ENCODE measurements at regions of chr10 and their contacts with region 1.

Region 1: DNA sequence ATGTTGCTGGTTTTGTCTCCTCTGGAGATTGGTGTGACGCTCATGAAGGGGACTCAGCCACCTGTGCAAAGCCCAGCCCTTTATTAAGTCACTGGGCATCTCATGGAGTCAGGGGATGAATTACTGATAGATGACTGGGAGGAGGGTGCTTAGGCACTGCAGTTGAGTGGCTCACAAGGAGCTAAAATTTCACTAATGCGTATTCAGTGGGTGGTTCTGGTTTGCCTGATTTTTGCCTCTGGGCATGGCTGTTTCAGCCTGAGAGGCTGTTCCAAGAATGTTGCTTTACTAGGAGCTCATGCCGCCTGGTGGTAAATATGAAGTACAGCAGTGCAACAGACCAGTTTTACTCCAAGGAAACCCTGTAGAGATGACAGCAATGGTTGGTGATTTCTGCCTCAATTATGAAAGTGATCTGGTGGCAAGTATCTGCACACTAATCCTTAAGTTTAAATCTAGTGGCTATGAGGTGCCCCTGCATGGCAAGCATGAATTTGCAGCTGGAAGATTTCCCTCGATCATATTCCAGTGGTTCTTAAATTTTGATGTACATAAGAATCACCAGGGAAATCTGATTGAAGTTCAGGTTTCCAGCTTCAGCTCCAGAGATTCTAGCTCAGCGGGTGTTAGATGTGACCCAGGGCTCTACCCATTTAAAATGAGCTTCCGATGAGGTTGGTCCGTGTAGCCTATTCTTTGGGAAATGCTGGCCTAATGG is 19.9 kb downstream of the ACTA2 start:
- DNase-seq: peak; percentile 59
- ATAC-seq: peak; percentile 84
- H3K4me3 Mint-ChIP-seq: no peak overlapping the region
- H3K27ac Mint-ChIP-seq: peak overlapping the region; percentile 20
- H3K4me1 Mint-ChIP-seq: peaks cover 18% of the 10 kb centered on the region
- H3K27me3 Mint-ChIP-seq: no peaks in the 10 kb centered on the region

Region 2: DNA sequence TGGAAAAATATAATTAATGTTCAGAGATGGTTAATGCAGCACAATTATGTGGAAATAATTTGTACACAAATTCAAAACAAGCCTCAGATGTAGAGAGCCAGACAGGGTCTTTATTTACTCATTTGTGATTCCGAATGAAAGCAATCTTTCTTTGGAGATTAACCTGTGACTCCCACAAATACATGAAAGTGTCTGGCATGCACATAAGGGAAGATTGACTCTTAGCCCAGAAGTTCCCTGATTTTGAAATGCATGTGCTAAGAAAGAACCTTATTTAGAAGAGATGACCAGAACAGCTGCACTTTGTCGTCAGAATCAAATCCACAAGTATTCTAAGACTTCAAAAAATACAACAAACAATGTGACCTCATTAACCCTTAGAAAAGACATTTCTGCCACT is 394.7 kb before region 1 on chr10:
- CTCF ChIA-PET with region 1: no interaction called
- POLR2A ChIA-PET with region 1: no interaction called
- intact Hi-C with region 1: no loop called
- DNase-seq: no peak
- ATAC-seq: no peak
- H3K4me3 Mint-ChIP-seq: no peak overlapping the region
- H3K27ac Mint-ChIP-seq: no peak overlapping the region
- H3K4me1 Mint-ChIP-seq: no peaks in the 10 kb centered on the region
- H3K27me3 Mint-ChIP-seq: no peaks in the 10 kb centered on the region

Region 3: DNA sequence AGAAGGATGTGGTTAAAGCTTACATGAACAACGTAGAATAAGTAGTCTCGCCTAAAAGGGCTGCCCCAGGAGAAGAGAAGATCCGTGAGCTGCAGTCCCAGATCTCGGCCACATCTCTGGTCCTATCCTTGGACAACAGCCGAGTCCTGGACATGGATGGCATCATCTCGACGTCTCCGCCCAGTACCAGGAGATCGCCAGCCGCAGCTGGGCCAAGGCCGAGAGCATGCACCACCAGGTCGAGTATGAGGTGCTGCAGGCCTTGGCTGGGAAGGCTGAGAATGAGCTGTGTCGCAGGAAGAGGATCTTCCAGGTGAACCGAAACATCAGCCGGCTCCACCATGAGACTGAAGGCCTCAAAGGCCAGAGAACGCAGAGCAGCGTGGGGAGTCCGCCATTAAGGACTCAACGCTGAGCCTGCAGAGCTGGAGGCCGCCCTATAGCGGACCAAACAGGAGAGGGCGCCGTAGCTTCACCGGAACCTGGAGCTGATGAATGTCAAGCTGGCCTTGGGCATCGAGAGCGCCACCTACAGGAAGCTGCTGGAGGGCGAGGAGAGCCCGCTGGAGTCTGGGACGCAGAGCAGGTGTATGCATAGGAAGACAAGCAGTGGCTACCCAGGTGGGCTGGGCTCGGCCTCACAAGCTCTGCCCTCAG is 204.5 kb before region 1 on chr10:
- CTCF ChIA-PET with region 1: interaction called, 29 read pairs
- POLR2A ChIA-PET with region 1: no interaction called
- intact Hi-C with region 1: loop called in 1 of 2 experiments (anchors 1 kb)
- DNase-seq: peak; percentile 85
- ATAC-seq: peak; percentile 64
- H3K4me3 Mint-ChIP-seq: no peak overlapping the region
- H3K27ac Mint-ChIP-seq: no peak overlapping the region
- H3K4me1 Mint-ChIP-seq: peaks cover 6% of the 10 kb centered on the region
- H3K27me3 Mint-ChIP-seq: peaks cover 2% of the 10 kb centered on the region

Region 4: GRCh38 chr10:88880282-88881076 is 52.2 kb before region 1 on chr10:
- CTCF ChIA-PET with region 1: interaction called, 20 read pairs
- POLR2A ChIA-PET with region 1: no interaction called
- intact Hi-C with region 1: loop called in 1 of 2 experiments (anchors 2 kb)
- DNase-seq: peak; percentile 87
- ATAC-seq: peak; percentile 81
- H3K4me3 Mint-ChIP-seq: peak overlapping the region; percentile 97
- H3K27ac Mint-ChIP-seq: peak overlapping the region; percentile 98
- H3K4me1 Mint-ChIP-seq: peaks cover 65% of the 10 kb centered on the region
- H3K27me3 Mint-ChIP-seq: no peaks in the 10 kb centered on the region

Region 5: DNA sequence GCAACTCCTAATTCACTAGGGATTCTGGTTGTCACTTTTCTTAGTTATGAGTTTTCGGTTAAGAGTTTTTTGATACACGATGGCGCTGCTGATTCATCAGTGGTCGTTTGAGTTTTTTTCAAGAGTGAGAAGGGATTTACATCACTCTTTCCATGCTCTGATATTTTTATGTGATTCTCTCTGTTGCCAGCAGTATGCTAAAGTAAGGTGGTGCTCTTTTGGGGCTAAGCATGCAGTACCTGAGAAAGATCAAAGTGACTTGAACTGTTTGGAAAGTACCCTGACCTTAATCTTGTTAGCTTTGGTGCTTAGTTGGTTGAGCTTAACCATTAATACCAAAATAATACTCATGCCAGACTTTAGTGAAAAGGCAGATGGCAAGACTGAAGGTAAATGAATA is 24.5 kb before region 1 on chr10:
- CTCF ChIA-PET with region 1: interaction called, 14 read pairs
- POLR2A ChIA-PET with region 1: no interaction called
- intact Hi-C with region 1: no loop called
- DNase-seq: peak; percentile 34
- ATAC-seq: peak; percentile 89
- H3K4me3 Mint-ChIP-seq: peak overlapping the region; percentile 24
- H3K27ac Mint-ChIP-seq: peak overlapping the region; percentile 69
- H3K4me1 Mint-ChIP-seq: peaks cover 22% of the 10 kb centered on the region
- H3K27me3 Mint-ChIP-seq: no peaks in the 10 kb centered on the region

Region 6: DNA sequence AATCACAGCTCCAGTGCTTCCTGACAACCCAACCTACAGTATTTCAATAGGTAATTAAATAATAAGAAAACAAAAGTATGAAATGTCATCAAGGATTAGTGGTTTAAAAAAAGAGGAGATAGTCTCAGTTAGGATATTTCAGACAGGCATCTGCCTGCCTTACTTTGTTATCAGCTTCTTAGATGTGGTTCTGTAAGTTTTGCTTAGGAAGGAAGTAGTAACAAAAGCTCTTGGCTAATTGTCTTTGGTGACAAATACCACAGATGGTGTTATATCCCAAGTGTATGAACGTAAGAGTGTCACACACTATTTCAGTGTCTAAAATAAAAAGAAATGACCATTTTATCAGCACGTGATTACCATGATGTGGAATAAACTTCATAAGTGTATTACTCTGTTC is 29.6 kb after region 1 on chr10:
- CTCF ChIA-PET with region 1: interaction called, 7 read pairs
- POLR2A ChIA-PET with region 1: no interaction called
- intact Hi-C with region 1: loop called in 1 of 2 experiments (anchors 2 kb)
- DNase-seq: no peak
- ATAC-seq: no peak
- H3K4me3 Mint-ChIP-seq: no peak overlapping the region
- H3K27ac Mint-ChIP-seq: no peak overlapping the region
- H3K4me1 Mint-ChIP-seq: peaks cover 26% of the 10 kb centered on the region
- H3K27me3 Mint-ChIP-seq: no peaks in the 10 kb centered on the region

Region 7: DNA sequence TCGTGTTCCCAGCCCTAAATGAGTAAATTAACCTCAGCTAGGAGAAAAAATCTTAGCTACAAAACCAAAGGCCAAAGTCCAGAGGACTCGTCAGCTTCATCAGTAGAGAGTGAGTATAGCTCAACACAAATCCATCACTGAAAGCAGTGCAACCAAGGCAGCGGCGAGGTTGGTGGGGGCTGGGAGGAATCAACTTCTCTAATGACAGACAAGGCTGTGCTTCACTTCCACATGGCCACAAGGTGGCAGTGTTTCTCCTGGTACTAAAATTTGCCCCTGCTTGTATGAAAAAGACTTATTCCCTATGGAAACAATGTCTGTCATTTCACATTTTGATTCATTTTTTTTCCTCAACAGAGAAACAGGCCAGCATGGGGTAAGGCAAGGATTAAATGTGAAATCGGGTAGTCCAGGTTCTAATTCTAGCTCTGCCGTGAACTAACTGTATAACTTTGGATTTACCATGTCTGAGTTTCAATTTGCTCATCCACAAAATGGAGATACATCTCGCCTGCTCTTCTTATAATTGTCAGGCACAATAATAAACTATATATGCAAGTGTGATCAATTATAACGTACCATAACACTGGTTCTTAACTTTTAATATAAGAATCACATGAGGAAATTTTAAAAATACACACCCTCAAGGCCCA is 97.2 kb after region 1 on chr10:
- CTCF ChIA-PET with region 1: interaction called, 76 read pairs
- POLR2A ChIA-PET with region 1: no interaction called
- intact Hi-C with region 1: loop called (anchors 1 kb)
- DNase-seq: peak; percentile 85
- ATAC-seq: peak; percentile 64
- H3K4me3 Mint-ChIP-seq: no peak overlapping the region
- H3K27ac Mint-ChIP-seq: no peak overlapping the region
- H3K4me1 Mint-ChIP-seq: peaks cover 32% of the 10 kb centered on the region
- H3K27me3 Mint-ChIP-seq: no peaks in the 10 kb centered on the region

Region 8: GRCh38 chr10:89217057-89217990 is 284.6 kb after region 1 on chr10:
- CTCF ChIA-PET with region 1: interaction called, 77 read pairs
- POLR2A ChIA-PET with region 1: no interaction called
- intact Hi-C with region 1: loop called (anchors 1 kb)
- DNase-seq: peak; percentile 76
- ATAC-seq: peak; percentile 55
- H3K4me3 Mint-ChIP-seq: no peak overlapping the region
- H3K27ac Mint-ChIP-seq: no peak overlapping the region
- H3K4me1 Mint-ChIP-seq: peaks cover 9% of the 10 kb centered on the region
- H3K27me3 Mint-ChIP-seq: no peaks in the 10 kb centered on the region